ENCODE measurements at regions of chr11 and their contacts with region 1.

Region 1: GRCh38 chr11:94973099-94973968 is at the starts of genes CWC15 and KDM4D:
- DNase-seq: peak; percentile 88 to 91
- H3K4me3 ChIP-seq: peak within 1 kb of the TSS; percentile 76
- H3K27ac ChIP-seq: peak within 1 kb of the TSS; percentile 44
- H3K4me1 ChIP-seq: peaks cover 11% of the 10 kb centered on the region
- H3K27me3 ChIP-seq: no peaks in the 10 kb centered on the region
- CTCF ChIP-seq: no peak
- total RNA-seq, gene CWC15: 50.9 and 54.2 TPM in 2 replicates
- total RNA-seq, gene KDM4D: 0.85 and 1.1 TPM in 2 replicates

Region 2: DNA sequence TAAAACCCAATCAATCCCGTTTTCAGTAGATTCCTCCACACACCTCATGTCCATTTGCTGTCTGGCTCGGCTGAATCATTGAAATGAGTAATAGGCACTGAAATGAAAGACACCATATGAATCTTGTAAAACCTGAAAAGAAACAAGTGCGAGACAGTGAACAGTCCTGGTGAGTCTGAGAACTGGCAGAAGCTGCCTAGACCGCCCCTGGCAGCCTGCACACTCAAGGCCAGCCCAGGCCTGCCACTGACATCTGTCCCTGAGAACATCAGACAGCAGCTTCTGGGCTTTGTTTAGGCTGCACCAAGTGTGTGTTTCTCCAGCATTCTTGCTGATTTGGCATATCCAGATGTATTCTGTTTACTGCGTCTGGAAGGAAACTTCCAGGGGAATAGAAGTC is 161.2 kb after region 1 on chr11:
- CTCF ChIA-PET with region 1: no interaction called
- POLR2A ChIA-PET with region 1: no interaction called
- intact Hi-C with region 1: loop called (anchors 1 kb)
- DNase-seq: peak; percentile 73 to 94
- H3K4me3 ChIP-seq: no peak overlapping the region
- H3K27ac ChIP-seq: peak overlapping the region; percentile 43
- H3K4me1 ChIP-seq: peaks cover 25% of the 10 kb centered on the region
- H3K27me3 ChIP-seq: no peaks in the 10 kb centered on the region
- CTCF ChIP-seq: no peak

Measured in PC-9 (cell line).